Activated CD4-positive, alpha-beta memory T cell treated with anti-CD3 and anti-CD28 coated beads for 36 hours (primary cell): ENCODE measurements at regions of chr7 and their contacts with region 1.

Region 1: GRCh38 chr7:112550468-112551060 is 69.8 kb downstream of the LSMEM1 start:
- DNase-seq: no peak
- H3K4me3 Mint-ChIP-seq: no peak overlapping the region
- H3K27ac Mint-ChIP-seq: no peak overlapping the region
- H3K4me1 Mint-ChIP-seq: no peaks in the 10 kb centered on the region
- H3K27me3 Mint-ChIP-seq: peaks cover 5% of the 10 kb centered on the region

Region 2: GRCh38 chr7:112869111-112869757 is 318.7 kb after region 1 on chr7:
- CTCF ChIA-PET with region 1: interaction called, 8 read pairs
- POLR2A ChIA-PET with region 1: no interaction called
- intact Hi-C with region 1: loop called (anchors 10 kb)
- DNase-seq: peak; percentile 69
- H3K4me3 Mint-ChIP-seq: no peak overlapping the region
- H3K27ac Mint-ChIP-seq: no peak overlapping the region
- H3K4me1 Mint-ChIP-seq: peaks cover 14% of the 10 kb centered on the region
- H3K27me3 Mint-ChIP-seq: no peaks in the 10 kb centered on the region

Region 3: DNA sequence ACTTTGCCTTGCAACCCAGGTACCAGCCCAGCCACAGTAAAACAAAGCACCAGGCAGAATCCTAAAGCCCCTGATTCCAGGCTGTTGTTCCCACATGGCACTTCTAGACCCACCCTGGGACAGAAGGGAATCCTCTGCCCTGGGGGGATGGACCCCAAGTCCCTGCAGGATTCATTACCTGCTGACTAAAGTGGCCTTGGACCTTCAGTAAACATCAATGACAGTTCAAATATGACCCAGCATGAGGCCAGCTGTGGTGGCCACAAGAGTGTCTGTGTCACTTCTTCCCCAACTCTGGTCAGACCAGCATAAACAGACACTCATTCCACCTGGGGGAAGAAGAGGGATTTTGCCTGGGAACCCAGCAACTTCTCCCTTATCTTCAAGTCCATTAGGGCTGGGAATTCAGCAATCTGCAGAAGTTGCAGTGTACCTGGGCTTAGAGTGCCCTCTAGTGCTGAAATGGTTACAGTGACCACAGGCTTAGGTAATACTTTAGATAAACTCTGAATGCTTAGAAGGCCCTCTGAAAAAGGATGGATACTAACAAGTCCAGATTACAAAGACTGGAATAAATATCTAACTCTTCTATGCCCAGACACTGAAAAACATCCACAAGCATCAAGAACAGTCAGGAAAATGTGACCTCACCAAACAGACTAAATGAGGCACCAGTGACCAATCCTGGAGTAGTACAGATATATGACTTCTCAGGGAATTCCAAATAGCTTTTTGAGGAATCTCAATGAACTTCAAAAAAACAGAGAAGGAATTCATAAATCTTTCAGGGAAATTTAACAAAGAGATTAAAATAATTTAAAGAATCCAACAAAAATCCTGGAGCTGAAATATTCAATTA is 348.1 kb after region 1 on chr7:
- CTCF ChIA-PET with region 1: interaction called, 32 read pairs
- POLR2A ChIA-PET with region 1: no interaction called
- intact Hi-C with region 1: loop called (anchors 1 kb)
- DNase-seq: peak; percentile 42
- H3K4me3 Mint-ChIP-seq: no peak overlapping the region
- H3K27ac Mint-ChIP-seq: no peak overlapping the region
- H3K4me1 Mint-ChIP-seq: no peaks in the 10 kb centered on the region
- H3K27me3 Mint-ChIP-seq: no peaks in the 10 kb centered on the region

Region 4: DNA sequence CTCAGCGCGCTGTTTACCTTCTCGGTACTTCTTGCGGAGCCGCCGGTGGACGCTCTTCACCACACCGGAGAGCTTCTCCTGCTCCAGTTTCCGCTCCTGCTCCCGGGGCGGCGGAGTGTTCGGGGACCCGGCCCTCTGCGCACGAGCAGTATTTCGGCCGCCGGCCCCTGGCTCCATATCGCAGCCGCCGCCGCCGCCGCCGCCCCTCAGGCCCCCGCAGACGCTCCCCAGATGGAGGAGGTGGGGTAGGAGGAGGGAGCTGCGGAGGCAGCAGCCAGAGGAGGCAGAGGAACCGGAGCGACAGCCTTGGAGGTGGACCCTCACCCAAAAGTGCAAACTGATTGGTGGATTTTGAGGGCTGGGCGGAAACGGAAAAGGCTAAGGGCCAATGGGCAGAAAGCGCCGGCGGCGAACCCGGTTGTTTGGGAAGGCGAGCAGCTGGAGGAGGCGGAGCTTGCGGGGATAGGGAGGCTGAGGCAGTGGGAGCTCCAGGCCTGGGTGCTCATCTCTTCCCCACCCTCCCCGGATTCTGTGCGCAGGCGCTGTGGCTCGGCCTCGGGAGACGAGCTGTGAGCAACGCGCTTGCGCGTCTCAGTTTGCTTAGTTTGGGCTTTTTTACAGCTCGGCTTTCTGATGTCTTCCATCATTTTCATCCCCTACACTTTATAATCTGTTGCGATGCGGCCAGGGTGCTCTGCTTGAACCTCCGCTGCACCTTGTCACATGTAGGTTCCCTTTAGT is 389.2 kb after region 1 on chr7:
- CTCF ChIA-PET with region 1: interaction called, 3 read pairs
- POLR2A ChIA-PET with region 1: no interaction called
- intact Hi-C with region 1: loop called (anchors 5 kb)
- DNase-seq: peak; percentile 100
- H3K4me3 Mint-ChIP-seq: peak overlapping the region; percentile 87
- H3K27ac Mint-ChIP-seq: peak overlapping the region; percentile 93
- H3K4me1 Mint-ChIP-seq: peaks cover 34% of the 10 kb centered on the region
- H3K27me3 Mint-ChIP-seq: peaks cover 2% of the 10 kb centered on the region

Region 5: DNA sequence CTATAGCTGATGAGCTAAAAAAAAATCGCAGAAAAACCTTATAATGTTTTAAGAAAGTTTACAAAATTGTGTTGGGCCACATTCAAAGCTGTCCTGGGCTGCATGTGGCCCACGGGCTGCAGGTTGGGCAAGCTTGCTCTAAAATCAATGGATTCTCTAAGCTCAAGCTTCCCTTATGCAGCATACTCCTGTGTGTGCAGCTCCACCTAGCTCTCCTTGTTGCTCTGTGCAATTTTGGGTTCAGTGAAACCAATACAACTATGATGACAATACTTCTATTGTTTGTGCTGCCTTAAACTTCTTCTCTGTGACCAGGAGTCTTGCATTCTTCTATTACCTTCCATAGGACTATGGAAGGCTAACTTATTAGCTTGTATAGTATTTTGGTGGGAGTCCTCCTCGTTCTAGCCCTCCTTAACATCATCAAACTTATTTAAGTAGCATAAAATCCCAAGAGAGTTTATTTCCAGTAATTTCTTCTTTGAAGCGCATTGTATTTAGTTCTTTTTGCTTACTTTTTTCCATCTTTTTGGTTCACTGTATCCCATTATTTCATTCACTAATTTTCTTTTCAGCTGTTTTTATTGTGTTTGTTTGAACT is 738.7 kb after region 1 on chr7:
- CTCF ChIA-PET with region 1: no interaction called
- POLR2A ChIA-PET with region 1: no interaction called
- intact Hi-C with region 1: loop called (anchors 5 kb)
- DNase-seq: no peak
- H3K4me3 Mint-ChIP-seq: no peak overlapping the region
- H3K27ac Mint-ChIP-seq: no peak overlapping the region
- H3K4me1 Mint-ChIP-seq: no peaks in the 10 kb centered on the region
- H3K27me3 Mint-ChIP-seq: peaks cover 2% of the 10 kb centered on the region

Region 6: GRCh38 chr7:113710310-113711106 is 1159.9 kb after region 1 on chr7:
- CTCF ChIA-PET with region 1: interaction called, 3 read pairs
- POLR2A ChIA-PET with region 1: no interaction called
- intact Hi-C with region 1: loop called (anchors 2 kb)
- DNase-seq: peak; percentile 24
- H3K4me3 Mint-ChIP-seq: no peak overlapping the region
- H3K27ac Mint-ChIP-seq: no peak overlapping the region
- H3K4me1 Mint-ChIP-seq: no peaks in the 10 kb centered on the region
- H3K27me3 Mint-ChIP-seq: peaks cover 4% of the 10 kb centered on the region